ENCODE measurements at regions of chr1 and their contacts with region 1.

Region 1: DNA sequence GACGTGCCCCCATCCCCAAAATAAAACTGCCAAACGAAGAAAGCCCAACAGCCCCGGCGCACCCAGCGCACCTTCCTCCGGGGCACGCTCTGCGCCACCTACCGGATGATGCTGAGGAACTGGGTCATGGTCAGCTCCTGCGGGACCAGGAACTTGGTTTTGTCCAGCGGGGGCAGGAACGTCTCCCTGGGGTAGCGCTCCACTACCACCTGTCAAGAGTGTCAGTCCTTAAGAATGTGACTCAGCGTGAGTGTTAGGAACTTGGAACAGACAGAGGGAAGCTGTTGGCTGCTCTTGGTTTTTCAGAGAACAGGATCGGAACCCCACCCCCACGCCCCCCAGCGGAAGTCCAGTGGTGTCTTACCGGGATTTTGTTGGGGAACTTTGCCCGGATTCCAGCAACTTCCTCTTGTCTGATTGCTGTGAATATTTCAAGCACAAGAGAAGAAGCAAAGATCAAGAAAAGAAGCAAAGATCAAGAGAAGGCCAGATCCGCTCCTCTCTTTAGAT is 431 bp downstream of the MAP1LC3C start:
- DNase-seq: peak; percentile 81
- ATAC-seq: peak; percentile 91

Region 2: GRCh38 chr1:241895013-241895412 is 103.5 kb before region 1 on chr1:
- intact Hi-C with region 1: loop called (anchors 10 kb)
- DNase-seq: no peak
- ATAC-seq: no peak

Region 3: DNA sequence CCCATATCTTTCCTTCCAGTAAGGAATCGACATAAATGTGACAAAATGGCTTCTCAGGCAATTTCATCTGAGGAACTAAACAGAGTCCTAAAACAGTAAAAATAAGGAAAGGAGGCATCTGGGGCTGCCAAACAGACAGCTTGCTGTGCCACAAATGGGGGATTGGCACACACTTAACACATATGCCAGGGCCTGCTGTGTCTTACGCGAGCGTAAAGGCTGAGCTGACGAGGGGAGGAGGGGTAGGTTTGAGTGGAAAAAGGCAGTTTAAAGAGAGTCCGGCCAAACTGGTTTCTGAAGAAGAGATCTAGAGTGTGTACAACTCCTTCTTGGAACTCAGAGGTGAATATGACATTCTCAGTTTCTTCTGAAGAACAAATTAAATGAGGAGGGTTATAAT is 244.5 kb after region 1 on chr1:
- intact Hi-C with region 1: no loop called
- DNase-seq: no peak
- ATAC-seq: no peak